ENCODE measurements at regions of chr3 and their contacts with region 1.

Region 1: GRCh38 chr3:194404365-194405140 is 5.5 kb upstream of the GP5 start:
- DNase-seq: no peak
- H3K4me3 ChIP-seq: no peak overlapping the region
- H3K27ac ChIP-seq: no peak overlapping the region
- H3K4me1 ChIP-seq: no peaks in the 10 kb centered on the region
- H3K27me3 ChIP-seq: no peaks in the 10 kb centered on the region
- CTCF ChIP-seq: peak; percentile 45 to 55 (median 52)
- POLR2A ChIP-seq: no peak

Region 2: GRCh38 chr3:194333212-194333980 is 71.2 kb before region 1 on chr3:
- intact Hi-C with region 1: loop called (anchors 5 kb)
- DNase-seq: no peak
- H3K4me3 ChIP-seq: peak overlapping the region; percentile 36 to 52
- H3K27ac ChIP-seq: no peak overlapping the region
- H3K4me1 ChIP-seq: peaks cover 10% of the 10 kb centered on the region
- H3K27me3 ChIP-seq: no peaks in the 10 kb centered on the region
- CTCF ChIP-seq: peak; percentile 94 to 98 (median 95)
- POLR2A ChIP-seq: no peak

Measured in vagina (tissue), 2 donors.